ENCODE measurements at regions of chr12 and their contacts with region 1.

Region 1: GRCh38 chr12:14937689-14938088 is 648 bp downstream of the ERP27 start:
- DNase-seq: peak; percentile 41
- H3K4me3 Mint-ChIP-seq: no peak overlapping the region
- H3K27ac Mint-ChIP-seq: no peak overlapping the region
- H3K4me1 Mint-ChIP-seq: peaks cover 43% of the 10 kb centered on the region
- H3K27me3 Mint-ChIP-seq: no peaks in the 10 kb centered on the region

Region 2: GRCh38 chr12:14986449-14986848 is 48.8 kb after region 1 on chr12:
- CTCF ChIA-PET with region 1: interaction called, 4 read pairs
- intact Hi-C with region 1: loop called (anchors 2 kb)
- DNase-seq: no peak
- H3K4me3 Mint-ChIP-seq: no peak overlapping the region
- H3K27ac Mint-ChIP-seq: no peak overlapping the region
- H3K4me1 Mint-ChIP-seq: peaks cover 34% of the 10 kb centered on the region
- H3K27me3 Mint-ChIP-seq: no peaks in the 10 kb centered on the region

Measured in activated naive CD4-positive, alpha-beta T cell treated with anti-CD3 and anti-CD28 coated beads for 36 hours (primary cell).